Activated B cell treated with CpG ODN at 0.5 μM for 24 hours (primary cell): ENCODE measurements at regions of chr6 and their contacts with region 1.

Region 1: GRCh38 chr6:53244958-53245357 is 96.3 kb upstream of the GCM1 start:
- DNase-seq: peak; percentile 42
- ATAC-seq: peak; percentile 83
- H3K4me3 Mint-ChIP-seq: peak overlapping the region; percentile 63
- H3K27ac Mint-ChIP-seq: peak overlapping the region; percentile 96
- H3K4me1 Mint-ChIP-seq: peaks cover 93% of the 10 kb centered on the region
- H3K27me3 Mint-ChIP-seq: no peaks in the 10 kb centered on the region
- CTCF ChIP-seq: no peak

Region 2: GRCh38 chr6:52144201-52145076 is 1100.5 kb before region 1 on chr6:
- CTCF ChIA-PET with region 1: no interaction called
- POLR2A ChIA-PET with region 1: no interaction called
- intact Hi-C with region 1: no loop called
- DNase-seq: no peak
- ATAC-seq: no peak
- H3K4me3 Mint-ChIP-seq: no peak overlapping the region
- H3K27ac Mint-ChIP-seq: no peak overlapping the region
- H3K4me1 Mint-ChIP-seq: no peaks in the 10 kb centered on the region
- H3K27me3 Mint-ChIP-seq: peaks cover 16% of the 10 kb centered on the region
- CTCF ChIP-seq: no peak

Region 3: GRCh38 chr6:52497652-52498408 is 747.1 kb before region 1 on chr6:
- CTCF ChIA-PET with region 1: no interaction called
- POLR2A ChIA-PET with region 1: no interaction called
- intact Hi-C with region 1: loop called (anchors 10 kb)
- DNase-seq: peak; percentile 37
- ATAC-seq: peak; percentile 77
- H3K4me3 Mint-ChIP-seq: peak overlapping the region; percentile 60
- H3K27ac Mint-ChIP-seq: peak overlapping the region; percentile 98
- H3K4me1 Mint-ChIP-seq: peaks cover 66% of the 10 kb centered on the region
- H3K27me3 Mint-ChIP-seq: no peaks in the 10 kb centered on the region
- CTCF ChIP-seq: no peak

Region 4: GRCh38 chr6:53159558-53159957 is 85.4 kb before region 1 on chr6:
- CTCF ChIA-PET with region 1: no interaction called
- POLR2A ChIA-PET with region 1: no interaction called
- intact Hi-C with region 1: no loop called
- DNase-seq: no peak
- ATAC-seq: no peak
- H3K4me3 Mint-ChIP-seq: no peak overlapping the region
- H3K27ac Mint-ChIP-seq: no peak overlapping the region
- H3K4me1 Mint-ChIP-seq: peaks cover 7% of the 10 kb centered on the region
- H3K27me3 Mint-ChIP-seq: no peaks in the 10 kb centered on the region
- CTCF ChIP-seq: no peak

Region 5: GRCh38 chr6:53199156-53199555 is 45.8 kb before region 1 on chr6:
- CTCF ChIA-PET with region 1: interaction called, 3 read pairs
- POLR2A ChIA-PET with region 1: interaction called, 5 read pairs
- intact Hi-C with region 1: loop called (anchors 1 kb)
- DNase-seq: no peak
- ATAC-seq: peak; percentile 97
- H3K4me3 Mint-ChIP-seq: peak overlapping the region; percentile 17
- H3K27ac Mint-ChIP-seq: peak overlapping the region; percentile 80
- H3K4me1 Mint-ChIP-seq: peaks cover 75% of the 10 kb centered on the region
- H3K27me3 Mint-ChIP-seq: no peaks in the 10 kb centered on the region
- CTCF ChIP-seq: no peak

Region 6: GRCh38 chr6:53284901-53285300 is 39.9 kb after region 1 on chr6:
- CTCF ChIA-PET with region 1: interaction called, 3 read pairs
- POLR2A ChIA-PET with region 1: interaction called, 5 read pairs
- intact Hi-C with region 1: loop called (anchors 1 kb)
- DNase-seq: no peak
- ATAC-seq: no peak
- H3K4me3 Mint-ChIP-seq: no peak overlapping the region
- H3K27ac Mint-ChIP-seq: peak overlapping the region; percentile 77
- H3K4me1 Mint-ChIP-seq: peaks cover 87% of the 10 kb centered on the region
- H3K27me3 Mint-ChIP-seq: no peaks in the 10 kb centered on the region
- CTCF ChIP-seq: no peak

Region 7: DNA sequence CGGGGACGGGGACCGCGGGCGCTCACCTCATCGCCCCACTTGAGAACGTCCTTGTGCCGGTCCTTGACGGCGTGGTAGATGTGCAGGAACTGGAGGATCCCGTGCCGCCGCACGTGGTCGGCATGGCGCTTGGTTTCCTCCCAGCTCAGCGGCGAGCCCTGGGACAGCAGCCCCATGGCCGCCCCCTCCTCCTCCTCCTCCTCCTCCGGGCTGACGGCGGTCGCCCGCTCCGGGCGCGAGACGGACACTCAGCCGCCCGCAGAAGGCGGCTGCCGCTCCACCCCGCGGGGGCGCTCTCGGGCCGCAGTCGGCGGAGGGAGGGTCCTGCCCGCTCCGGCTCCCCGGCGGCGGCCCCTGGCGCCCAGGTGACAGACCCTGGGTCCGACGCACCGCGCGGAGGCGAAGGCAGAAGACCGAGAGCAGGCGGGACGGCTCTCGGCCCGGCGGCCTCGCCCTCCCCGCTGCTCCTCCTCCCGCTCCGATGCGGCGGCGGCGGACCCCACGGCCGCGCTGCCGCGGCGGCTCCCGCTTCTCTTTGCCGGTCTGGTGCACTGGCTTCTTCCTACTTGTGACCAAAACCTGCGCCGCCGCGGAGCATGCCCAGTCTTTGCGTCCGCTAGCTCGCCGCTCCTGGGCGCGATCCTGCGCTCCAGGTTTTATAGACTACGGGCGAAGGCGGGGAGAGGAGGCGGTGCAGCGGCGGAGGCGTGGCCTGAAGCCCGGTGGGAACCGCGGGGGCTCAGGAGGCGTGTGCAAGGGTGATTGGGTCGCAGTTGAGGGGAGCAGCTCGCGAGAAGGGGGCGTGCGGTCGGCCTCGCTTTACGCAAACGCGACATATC is 299.7 kb after region 1 on chr6 and contains the start of gene GCLC:
- CTCF ChIA-PET with region 1: no interaction called
- POLR2A ChIA-PET with region 1: no interaction called
- intact Hi-C with region 1: loop called (anchors 5 kb)
- DNase-seq: peak; percentile 87
- ATAC-seq: peak; percentile 71
- H3K4me3 Mint-ChIP-seq: peak within 1 kb of the TSS; percentile 93
- H3K27ac Mint-ChIP-seq: peak within 1 kb of the TSS; percentile 91
- H3K4me1 Mint-ChIP-seq: peaks cover 67% of the 10 kb centered on the region
- H3K27me3 Mint-ChIP-seq: no peaks in the 10 kb centered on the region
- CTCF ChIP-seq: peak; percentile 37
- total RNA-seq, gene GCLC: 26.6 and 27.1 TPM in 2 replicates